Psoas muscle (tissue), 8 donors: ENCODE measurements at regions of chr2 and their contacts with region 1.

Region 1: DNA sequence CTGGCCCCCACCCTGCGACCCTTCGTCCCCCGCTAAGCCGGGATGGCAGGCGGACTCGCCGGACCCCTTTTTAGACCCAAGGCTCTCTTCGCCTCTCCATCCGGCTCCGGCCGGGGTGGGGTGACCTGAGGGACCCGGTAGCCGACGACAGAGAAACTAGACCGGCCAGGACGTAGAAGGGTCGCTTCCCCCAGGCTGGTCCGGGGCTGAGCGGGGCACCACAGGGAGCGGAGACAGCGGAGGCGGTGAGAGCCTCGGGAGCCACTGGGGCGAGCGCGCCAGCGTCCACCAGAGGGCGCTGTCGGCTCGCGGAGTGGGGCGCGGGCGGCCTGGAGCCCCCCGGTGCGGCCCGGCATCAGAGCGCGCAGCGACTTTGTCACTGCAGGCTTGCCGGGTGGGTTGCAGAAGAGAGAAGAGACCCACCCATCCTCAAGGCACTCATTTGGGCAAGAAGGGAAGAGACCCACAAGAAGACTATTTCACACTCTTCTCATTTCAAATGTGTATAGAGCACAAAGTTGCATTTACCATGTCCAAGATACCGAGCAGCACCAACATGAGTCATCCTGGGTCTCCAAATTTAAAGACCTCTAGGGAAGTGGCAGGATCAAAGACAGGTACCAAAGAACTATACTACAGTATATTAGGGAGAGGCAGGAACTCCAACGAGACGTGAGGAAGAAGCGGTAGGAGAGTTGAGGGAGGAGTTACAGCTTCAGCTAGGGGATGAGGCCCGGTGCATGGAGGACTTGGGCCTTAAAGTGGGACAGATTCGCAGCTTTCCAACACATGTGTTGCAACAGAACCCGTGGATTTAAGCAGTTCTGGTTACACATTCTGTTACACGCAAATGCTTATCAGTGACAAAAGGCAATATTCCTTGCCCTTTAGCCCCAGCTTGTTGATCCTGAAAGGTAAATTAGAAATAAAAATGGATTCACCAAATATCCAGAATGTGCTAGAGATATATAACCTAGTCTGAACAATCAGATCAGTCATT is 7.6 kb upstream of the PRKCE start:
- DNase-seq: peak; percentile 75 to 82
- ATAC-seq: peak; percentile 97 to 99 (median 98)
- H3K4me3 ChIP-seq: peak overlapping the region; percentile 75
- H3K27ac ChIP-seq: no peak overlapping the region
- H3K4me1 ChIP-seq: peaks cover 12% of the 10 kb centered on the region
- H3K27me3 ChIP-seq: peaks cover 0 to 15% (median 0%) of the 10 kb centered on the region in 3 donors
- CTCF ChIP-seq: peak; percentile 98

Region 2: DNA sequence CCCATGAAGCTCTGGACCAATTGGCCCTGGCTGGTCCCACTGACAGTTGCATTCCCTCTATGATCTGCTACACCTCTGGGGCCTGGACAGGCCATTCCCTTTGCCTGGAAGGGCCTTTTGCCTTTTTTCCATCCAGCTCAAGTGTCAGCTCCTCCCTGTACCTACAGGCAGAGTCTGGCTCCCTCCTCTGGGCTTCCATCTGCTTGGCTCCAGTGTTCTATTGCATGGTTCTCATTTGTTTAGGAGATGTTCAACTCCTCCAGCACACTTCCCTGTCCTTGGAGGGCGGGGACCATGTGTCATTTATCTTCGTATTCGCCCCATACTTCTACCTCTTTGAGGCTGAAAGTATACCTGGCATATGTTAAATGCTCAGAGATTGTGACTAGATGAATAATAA is 68.7 kb after region 1 on chr2:
- intact Hi-C with region 1: loop called in 1 of 2 experiments (anchors 2 kb)
- DNase-seq: no peak
- ATAC-seq: peak; percentile 35 to 47 (median 42)
- H3K4me3 ChIP-seq: no peak overlapping the region
- H3K27ac ChIP-seq: no peak overlapping the region
- H3K4me1 ChIP-seq: peaks cover 29% of the 10 kb centered on the region
- H3K27me3 ChIP-seq: no peaks in the 10 kb centered on the region
- CTCF ChIP-seq: peak; percentile 35

Region 3: GRCh38 chr2:45778720-45779171 is 134.9 kb after region 1 on chr2:
- intact Hi-C with region 1: loop called (anchors 1 to 2 kb)
- DNase-seq: peak; percentile 30 to 62
- ATAC-seq: peak; percentile 65 to 91 (median 80)
- H3K4me3 ChIP-seq: no peak overlapping the region
- H3K27ac ChIP-seq: no peak overlapping the region
- H3K4me1 ChIP-seq: peaks cover 6% of the 10 kb centered on the region
- H3K27me3 ChIP-seq: no peaks in the 10 kb centered on the region
- CTCF ChIP-seq: peak; percentile 84

Region 4: GRCh38 chr2:45935791-45936622 is 292.2 kb after region 1 on chr2:
- intact Hi-C with region 1: loop called (anchors 1 to 2 kb)
- DNase-seq: peak; percentile 98
- ATAC-seq: peak; percentile 93 to 96 (median 94)
- H3K4me3 ChIP-seq: no peak overlapping the region
- H3K27ac ChIP-seq: peak overlapping the region; percentile 75
- H3K4me1 ChIP-seq: peaks cover 32% of the 10 kb centered on the region
- H3K27me3 ChIP-seq: no peaks in the 10 kb centered on the region
- CTCF ChIP-seq: peak; percentile 81